ENCODE measurements at regions of chr12 and their contacts with region 1.

Region 1: GRCh38 chr12:7859552-7859951 is 13.2 kb downstream of the SLC2A14 start:
- DNase-seq: no peak
- ATAC-seq: no peak
- H3K4me3 ChIP-seq: no peak overlapping the region
- H3K27ac ChIP-seq: no peak overlapping the region
- H3K4me1 ChIP-seq: peaks cover 63% of the 10 kb centered on the region
- H3K27me3 ChIP-seq: no peaks in the 10 kb centered on the region
- CTCF ChIP-seq: no peak
- EP300 ChIP-seq: no peak
- POLR2A ChIP-seq: no peak
- RAD21 ChIP-seq: no peak

Region 2: DNA sequence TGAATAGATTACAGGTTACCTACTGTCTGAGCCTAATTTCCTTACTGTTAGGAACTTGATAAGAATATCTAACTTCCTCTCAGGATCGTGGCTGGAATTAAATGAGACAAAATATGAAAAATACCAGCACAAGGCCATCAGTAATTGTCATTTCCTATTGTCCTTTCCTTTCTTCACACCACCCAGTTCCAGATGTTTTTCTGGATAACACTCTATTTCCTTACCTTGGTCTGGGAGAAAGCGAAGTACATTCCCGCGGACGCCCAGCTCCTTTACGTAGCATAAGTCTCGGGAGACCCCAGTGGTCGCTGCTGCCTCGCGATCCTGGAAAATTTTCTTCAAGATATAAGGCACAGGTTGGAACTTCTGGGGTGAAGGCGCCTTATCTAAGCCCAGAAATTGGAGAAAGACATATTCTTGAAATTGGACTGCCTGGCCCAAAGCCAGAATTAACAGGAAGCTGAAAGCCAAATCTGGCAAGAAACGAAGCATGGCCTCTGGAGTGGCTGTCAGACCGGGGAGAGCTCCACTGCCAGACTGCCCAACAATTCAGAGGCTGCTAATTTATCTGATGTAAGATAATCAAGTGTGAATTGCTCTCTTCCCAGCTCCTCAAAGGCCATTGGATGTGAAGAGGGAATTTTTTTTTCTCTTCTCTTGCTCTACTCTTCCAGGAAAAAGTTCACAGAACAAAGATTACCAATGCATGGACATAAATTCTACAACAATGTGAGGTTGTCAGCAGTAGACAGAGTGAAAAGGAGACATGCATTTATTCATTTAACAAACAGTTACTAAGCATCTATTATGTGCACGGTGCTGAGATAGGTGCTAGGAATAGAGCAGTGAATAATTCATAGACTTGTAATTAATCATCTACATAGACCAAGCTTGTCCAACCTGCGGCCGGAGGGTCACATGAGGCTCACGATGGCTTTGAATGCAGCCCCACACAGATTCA is 164.0 kb before region 1 on chr12 and contains the start of gene GDF3:
- CTCF ChIA-PET with region 1: no interaction called
- POLR2A ChIA-PET with region 1: no interaction called
- in situ Hi-C with region 1: no loop called
- intact Hi-C with region 1: no loop called
- DNase-seq: no peak
- ATAC-seq: no peak
- H3K4me3 ChIP-seq: no peak within 1 kb of the TSS
- H3K27ac ChIP-seq: no peak within 1 kb of the TSS
- H3K4me1 ChIP-seq: no peaks in the 10 kb centered on the region
- H3K27me3 ChIP-seq: no peaks in the 10 kb centered on the region
- CTCF ChIP-seq: no peak
- EP300 ChIP-seq: no peak
- POLR2A ChIP-seq: no peak
- RAD21 ChIP-seq: no peak
- total RNA-seq, gene GDF3: not detected in 2 replicates

Region 3: DNA sequence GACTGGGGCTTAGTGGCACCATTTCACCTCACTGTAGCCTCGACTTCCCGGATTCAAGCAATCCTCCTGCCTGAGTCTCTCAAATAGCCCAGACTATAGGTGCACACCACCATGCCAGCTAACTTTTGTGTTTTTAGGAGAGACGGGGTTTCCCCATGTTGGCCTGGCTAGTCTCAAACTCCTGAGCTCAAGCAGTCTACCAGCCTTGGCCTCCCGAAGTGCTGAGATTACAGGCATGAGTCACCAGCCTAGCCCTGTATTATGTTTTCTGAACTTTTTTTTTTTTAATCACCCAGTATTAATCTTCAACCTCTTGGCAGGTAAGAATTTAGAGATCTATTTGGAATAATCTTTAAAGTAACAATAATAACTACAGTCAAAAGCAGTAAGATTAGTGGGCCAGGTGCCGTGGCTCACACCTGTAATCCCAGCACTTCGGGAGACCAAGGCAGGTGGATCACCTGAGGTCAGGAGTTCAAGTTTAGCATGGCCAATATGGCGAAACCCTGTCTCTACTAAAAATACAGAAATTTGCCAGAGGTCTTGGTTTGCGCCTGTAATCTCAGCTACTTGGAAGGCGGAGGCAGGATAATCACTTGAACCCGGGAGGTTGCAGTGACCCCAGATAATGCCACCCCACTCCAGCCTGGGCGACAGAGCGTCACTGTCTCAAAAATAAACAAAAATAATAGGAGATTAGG is 61.7 kb before region 1 on chr12:
- CTCF ChIA-PET with region 1: no interaction called
- POLR2A ChIA-PET with region 1: no interaction called
- in situ Hi-C with region 1: no loop called
- intact Hi-C with region 1: no loop called
- DNase-seq: no peak
- ATAC-seq: no peak
- H3K4me3 ChIP-seq: peak overlapping the region; percentile 22 to 50 (median 37)
- H3K27ac ChIP-seq: no peak overlapping the region
- H3K4me1 ChIP-seq: peaks cover 44% of the 10 kb centered on the region
- H3K27me3 ChIP-seq: no peaks in the 10 kb centered on the region
- CTCF ChIP-seq: no peak
- EP300 ChIP-seq: no peak
- POLR2A ChIP-seq: no peak
- RAD21 ChIP-seq: no peak

Region 4: GRCh38 chr12:7872566-7873319 is 13.2 kb after region 1 on chr12 and contains the start of gene SLC2A14:
- CTCF ChIA-PET with region 1: no interaction called
- POLR2A ChIA-PET with region 1: no interaction called
- in situ Hi-C with region 1: no loop called
- intact Hi-C with region 1: no loop called
- DNase-seq: no peak
- ATAC-seq: no peak
- H3K4me3 ChIP-seq: no peak within 1 kb of the TSS
- H3K27ac ChIP-seq: no peak within 1 kb of the TSS
- H3K4me1 ChIP-seq: peaks cover 23% of the 10 kb centered on the region
- H3K27me3 ChIP-seq: no peaks in the 10 kb centered on the region
- CTCF ChIP-seq: no peak
- EP300 ChIP-seq: no peak
- POLR2A ChIP-seq: 0 out of 4 replicates have a peak, but pooled peaks of 1 of the 2 experiments have one; percentile 6
- RAD21 ChIP-seq: no peak
- total RNA-seq, gene SLC2A14: 6.6 and 7.7 TPM in 2 replicates

Region 5: DNA sequence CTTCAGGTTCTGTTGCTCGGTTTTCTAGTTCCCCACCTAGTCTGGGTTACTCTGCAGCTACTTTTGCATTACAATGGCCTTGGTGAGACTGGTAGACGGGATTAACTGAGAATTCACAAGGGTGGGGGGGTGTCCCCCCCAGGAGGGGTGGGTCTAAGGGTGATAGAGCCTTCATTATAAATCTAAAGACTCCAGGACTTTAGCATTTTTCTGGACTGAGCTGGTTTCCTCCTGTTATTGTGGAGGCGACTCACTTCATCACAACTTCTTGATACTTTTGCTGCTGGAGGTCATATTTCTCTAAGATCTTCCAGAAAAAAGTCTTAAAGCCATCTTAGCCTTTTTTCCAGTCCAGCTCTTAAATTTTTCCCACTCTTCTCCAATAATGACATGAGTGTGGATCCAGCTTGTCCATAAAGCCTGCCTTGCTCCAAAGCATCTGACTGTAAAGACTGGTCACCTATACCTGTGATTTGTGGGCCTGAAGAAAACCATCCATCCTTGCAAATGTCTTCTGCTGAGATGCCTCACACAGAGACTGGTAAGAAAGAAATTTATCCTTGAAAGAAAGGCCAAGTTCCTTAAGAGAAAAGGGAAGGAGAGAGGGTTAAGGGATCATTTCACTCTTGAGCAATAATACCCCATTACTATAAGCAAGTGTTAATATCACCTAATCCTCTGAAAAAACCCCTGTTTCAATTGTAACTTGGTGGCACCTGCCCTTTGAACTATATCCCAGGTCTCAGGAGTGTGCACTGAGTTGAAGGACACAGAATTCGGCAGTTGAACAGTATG is 32.8 kb after region 1 on chr12:
- CTCF ChIA-PET with region 1: no interaction called
- POLR2A ChIA-PET with region 1: interaction called, 3 read pairs
- in situ Hi-C with region 1: no loop called
- intact Hi-C with region 1: loop called (anchors 2 kb)
- DNase-seq: no peak
- ATAC-seq: no peak
- H3K4me3 ChIP-seq: no peak overlapping the region
- H3K27ac ChIP-seq: peak overlapping the region; percentile 99
- H3K4me1 ChIP-seq: peaks cover 64% of the 10 kb centered on the region
- H3K27me3 ChIP-seq: no peaks in the 10 kb centered on the region; a peak in 1 of 5 replicates
- CTCF ChIP-seq: no peak
- EP300 ChIP-seq: no peak
- POLR2A ChIP-seq: no peak
- RAD21 ChIP-seq: no peak

Region 6: DNA sequence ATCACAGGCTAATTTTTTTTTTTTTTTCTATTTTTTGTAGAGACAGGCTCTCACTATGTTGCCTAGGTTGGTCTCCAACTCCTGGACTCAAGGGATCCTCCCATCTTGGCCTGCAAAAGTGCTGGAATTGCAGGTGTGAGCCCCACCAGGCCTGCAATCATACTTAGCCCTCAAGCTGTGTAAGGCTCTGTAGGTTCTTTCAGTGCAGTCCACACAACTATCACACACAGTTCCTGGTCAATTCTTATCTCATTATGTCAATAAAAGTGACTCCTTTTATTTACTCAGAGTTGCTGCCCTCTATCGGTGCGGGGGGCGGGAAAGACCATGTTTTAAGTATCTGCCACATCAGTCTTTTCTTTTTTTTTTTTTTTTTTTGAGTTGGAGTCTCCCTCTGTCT is 47.5 kb after region 1 on chr12:
- CTCF ChIA-PET with region 1: interaction called, 16 read pairs
- POLR2A ChIA-PET with region 1: interaction called, 4 read pairs
- in situ Hi-C with region 1: no loop called
- intact Hi-C with region 1: loop called (anchors 1 kb)
- DNase-seq: peak; percentile 97
- ATAC-seq: peak; percentile 97
- H3K4me3 ChIP-seq: no peak overlapping the region
- H3K27ac ChIP-seq: peak overlapping the region; percentile 78
- H3K4me1 ChIP-seq: peaks cover 48% of the 10 kb centered on the region
- H3K27me3 ChIP-seq: no peaks in the 10 kb centered on the region
- CTCF ChIP-seq: peak; percentile 82
- EP300 ChIP-seq: peak in 1 of 2 experiments; percentile 90; a peak in 2 of 4 replicates
- POLR2A ChIP-seq: no peak
- RAD21 ChIP-seq: no peak

Region 7: GRCh38 chr12:7959701-7960121 is 100.2 kb after region 1 on chr12:
- CTCF ChIA-PET with region 1: interaction called, 11 read pairs
- POLR2A ChIA-PET with region 1: no interaction called
- in situ Hi-C with region 1: no loop called
- intact Hi-C with region 1: loop called (anchors 1 kb)
- DNase-seq: peak; percentile 44
- ATAC-seq: peak; percentile 68
- H3K4me3 ChIP-seq: peak overlapping the region; percentile 43 to 66 (median 60)
- H3K27ac ChIP-seq: no peak overlapping the region
- H3K4me1 ChIP-seq: peaks cover 24% of the 10 kb centered on the region
- H3K27me3 ChIP-seq: no peaks in the 10 kb centered on the region
- CTCF ChIP-seq: no peak
- EP300 ChIP-seq: no peak
- POLR2A ChIP-seq: no peak
- RAD21 ChIP-seq: no peak

Region 8: GRCh38 chr12:7995266-7995963 is 135.9 kb after region 1 on chr12:
- CTCF ChIA-PET with region 1: interaction called, 12 read pairs
- POLR2A ChIA-PET with region 1: no interaction called
- in situ Hi-C with region 1: loop called (anchors 10 kb)
- intact Hi-C with region 1: no loop called
- DNase-seq: peak; percentile 77
- ATAC-seq: peak; percentile 100
- H3K4me3 ChIP-seq: no peak overlapping the region
- H3K27ac ChIP-seq: no peak overlapping the region
- H3K4me1 ChIP-seq: peaks cover 31% of the 10 kb centered on the region
- H3K27me3 ChIP-seq: no peaks in the 10 kb centered on the region
- CTCF ChIP-seq: peak; percentile 82
- EP300 ChIP-seq: no peak
- POLR2A ChIP-seq: no peak
- RAD21 ChIP-seq: peak; percentile 87

Region 9: GRCh38 chr12:8026291-8026900 is 166.8 kb after region 1 on chr12:
- CTCF ChIA-PET with region 1: no interaction called
- POLR2A ChIA-PET with region 1: no interaction called
- in situ Hi-C with region 1: no loop called
- intact Hi-C with region 1: no loop called
- DNase-seq: peak; percentile 98
- ATAC-seq: peak; percentile 98
- H3K4me3 ChIP-seq: peak overlapping the region; percentile 56 to 72 (median 62)
- H3K27ac ChIP-seq: peak overlapping the region; percentile 92
- H3K4me1 ChIP-seq: peaks cover 15% of the 10 kb centered on the region
- H3K27me3 ChIP-seq: no peaks in the 10 kb centered on the region
- CTCF ChIP-seq: no peak
- EP300 ChIP-seq: no peak
- POLR2A ChIP-seq: peak; percentile 54 to 64
- RAD21 ChIP-seq: no peak